Naive thymus-derived CD4-positive, alpha-beta T cell (primary cell): ENCODE measurements at regions of chr11 and their contacts with region 1.

Region 1: DNA sequence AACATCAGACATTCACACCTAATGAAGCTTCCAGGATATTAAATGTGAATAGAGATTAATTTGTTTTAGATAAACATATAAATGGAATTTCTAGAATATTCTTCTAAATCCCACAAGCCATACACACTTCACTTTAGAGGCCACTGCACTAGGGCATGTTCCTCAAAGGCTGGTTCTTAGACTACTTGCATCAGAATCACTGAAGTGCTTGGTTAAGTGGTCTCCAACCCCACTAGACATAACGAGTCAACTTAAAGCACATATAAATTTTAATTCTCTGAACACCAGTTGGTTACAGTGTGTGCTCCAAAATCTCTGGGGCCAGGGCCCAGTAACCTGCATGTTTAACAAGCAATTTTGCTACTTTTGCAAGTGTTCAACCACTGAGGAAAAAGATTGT is 7.9 kb upstream of the ALKBH8 start:
- DNase-seq: no peak
- ATAC-seq: no peak
- H3K4me3 ChIP-seq: no peak overlapping the region
- H3K4me3 Mint-ChIP-seq: no peak overlapping the region
- H3K27ac ChIP-seq: no peak overlapping the region
- H3K27ac Mint-ChIP-seq: no peak overlapping the region
- H3K4me1 ChIP-seq: no peaks in the 10 kb centered on the region
- H3K4me1 Mint-ChIP-seq: peaks cover 0 to 2% (median 0%) of the 10 kb centered on the region in 7 donors
- H3K27me3 ChIP-seq: no peaks in the 10 kb centered on the region
- H3K27me3 Mint-ChIP-seq: peaks cover 0 to 12% (median 0%) of the 10 kb centered on the region in 5 donors

Region 2: DNA sequence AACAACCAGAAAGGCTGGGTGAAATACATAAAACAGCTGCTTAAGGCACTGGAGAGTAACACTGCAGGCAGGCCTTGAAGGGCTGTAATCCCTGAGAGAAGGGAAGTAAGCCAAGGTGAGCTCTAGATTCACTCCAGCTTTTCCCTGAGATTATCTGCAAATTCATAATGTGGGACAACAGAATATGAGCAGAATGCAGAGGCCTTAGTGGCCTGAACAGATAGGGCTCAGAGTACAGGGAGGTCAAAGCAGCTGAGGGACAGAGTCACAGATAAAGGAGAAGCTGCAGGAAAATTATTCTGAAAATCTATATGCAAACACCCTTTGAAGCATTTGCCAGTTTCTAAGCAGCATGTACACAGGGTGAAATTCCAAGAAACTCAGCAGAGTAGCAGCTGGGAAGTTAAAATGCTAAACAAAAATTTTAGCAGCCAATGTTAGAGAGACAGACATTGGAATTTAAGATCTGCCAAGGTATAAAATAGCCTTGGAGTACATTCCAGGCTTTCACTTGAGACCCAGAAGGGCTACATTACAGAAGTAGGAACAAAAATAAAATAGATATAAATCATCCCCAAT is 67.7 kb before region 1 on chr11:
- CTCF ChIA-PET with region 1: no interaction called
- POLR2A ChIA-PET with region 1: no interaction called
- intact Hi-C with region 1: no loop called
- DNase-seq: no peak
- ATAC-seq: no peak
- H3K4me3 ChIP-seq: no peak overlapping the region
- H3K4me3 Mint-ChIP-seq: no peak overlapping the region
- H3K27ac ChIP-seq: no peak overlapping the region
- H3K27ac Mint-ChIP-seq: no peak overlapping the region
- H3K4me1 ChIP-seq: no peaks in the 10 kb centered on the region
- H3K4me1 Mint-ChIP-seq: no peaks in the 10 kb centered on the region
- H3K27me3 ChIP-seq: no peaks in the 10 kb centered on the region
- H3K27me3 Mint-ChIP-seq: no peaks in the 10 kb centered on the region

Region 3: DNA sequence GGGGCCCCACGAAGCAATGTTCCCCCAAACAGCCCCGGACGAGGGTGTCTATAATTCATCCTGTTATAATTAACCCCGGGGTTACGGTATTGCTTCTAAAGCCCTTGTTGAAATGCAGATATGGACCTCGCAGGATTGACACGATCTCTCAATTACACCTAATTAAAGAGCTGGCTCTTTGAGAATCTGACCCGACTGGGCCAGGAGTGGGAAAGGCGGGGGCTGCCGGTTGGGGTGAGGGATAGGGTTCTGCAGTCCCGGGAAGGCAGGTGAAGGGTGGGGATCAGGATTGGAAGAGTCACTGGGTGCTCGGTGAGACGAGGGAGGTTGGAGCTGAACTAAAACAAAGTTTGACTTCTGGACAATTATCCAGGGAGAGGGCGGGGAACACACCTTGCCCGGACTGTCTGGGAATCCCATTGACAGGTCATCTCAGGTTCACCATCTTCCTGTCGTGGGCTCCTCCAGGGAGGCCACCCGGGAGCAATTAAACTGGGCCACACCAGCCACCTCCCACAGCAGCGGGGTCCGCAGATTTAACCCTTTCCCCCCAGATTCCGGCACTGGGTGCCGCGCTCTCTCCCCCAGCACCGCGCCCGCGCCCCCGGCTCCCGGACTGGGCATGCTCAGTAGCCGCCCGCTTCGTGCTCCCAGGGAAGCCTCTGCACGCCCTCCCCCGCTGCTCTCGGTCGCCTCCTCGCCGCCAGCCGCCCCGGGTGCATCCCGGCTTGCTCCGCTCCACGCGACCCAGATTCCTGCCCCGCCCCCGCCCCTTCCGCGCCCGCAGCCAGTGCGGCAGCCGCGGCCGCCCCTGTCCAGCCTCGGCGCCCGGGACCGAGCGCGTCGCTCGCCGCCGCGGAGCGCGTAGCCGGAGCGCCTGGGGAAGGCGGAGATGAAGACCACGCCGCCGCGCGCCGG is 17.3 kb after region 1 on chr11 and contains the start of gene ELMOD1:
- CTCF ChIA-PET with region 1: interaction called, 3 read pairs
- POLR2A ChIA-PET with region 1: no interaction called
- intact Hi-C with region 1: loop called in 1 of 2 experiments (anchors 2 kb)
- DNase-seq: peak in 5 of 9 donors; percentile 9 to 54 (median 18)
- ATAC-seq: peak; percentile 53
- H3K4me3 ChIP-seq: peak within 1 kb of the TSS; percentile 63
- H3K4me3 Mint-ChIP-seq: peak within 1 kb of the TSS; percentile 83 to 94 (median 88)
- H3K27ac ChIP-seq: no peak within 1 kb of the TSS
- H3K27ac Mint-ChIP-seq: peak within 1 kb of the TSS in 3 of 9 donors; percentile 16 to 82 (median 62)
- H3K4me1 ChIP-seq: peaks cover 8 to 13% of the 10 kb centered on the region in 2 donors
- H3K4me1 Mint-ChIP-seq: peaks cover 15 to 37% (median 20%) of the 10 kb centered on the region in 7 donors
- H3K27me3 ChIP-seq: peaks cover 28 to 35% of the 10 kb centered on the region in 2 donors
- H3K27me3 Mint-ChIP-seq: peaks cover 73 to 93% (median 82%) of the 10 kb centered on the region in 5 donors
- total RNA-seq, gene ELMOD1: not detected

Region 4: DNA sequence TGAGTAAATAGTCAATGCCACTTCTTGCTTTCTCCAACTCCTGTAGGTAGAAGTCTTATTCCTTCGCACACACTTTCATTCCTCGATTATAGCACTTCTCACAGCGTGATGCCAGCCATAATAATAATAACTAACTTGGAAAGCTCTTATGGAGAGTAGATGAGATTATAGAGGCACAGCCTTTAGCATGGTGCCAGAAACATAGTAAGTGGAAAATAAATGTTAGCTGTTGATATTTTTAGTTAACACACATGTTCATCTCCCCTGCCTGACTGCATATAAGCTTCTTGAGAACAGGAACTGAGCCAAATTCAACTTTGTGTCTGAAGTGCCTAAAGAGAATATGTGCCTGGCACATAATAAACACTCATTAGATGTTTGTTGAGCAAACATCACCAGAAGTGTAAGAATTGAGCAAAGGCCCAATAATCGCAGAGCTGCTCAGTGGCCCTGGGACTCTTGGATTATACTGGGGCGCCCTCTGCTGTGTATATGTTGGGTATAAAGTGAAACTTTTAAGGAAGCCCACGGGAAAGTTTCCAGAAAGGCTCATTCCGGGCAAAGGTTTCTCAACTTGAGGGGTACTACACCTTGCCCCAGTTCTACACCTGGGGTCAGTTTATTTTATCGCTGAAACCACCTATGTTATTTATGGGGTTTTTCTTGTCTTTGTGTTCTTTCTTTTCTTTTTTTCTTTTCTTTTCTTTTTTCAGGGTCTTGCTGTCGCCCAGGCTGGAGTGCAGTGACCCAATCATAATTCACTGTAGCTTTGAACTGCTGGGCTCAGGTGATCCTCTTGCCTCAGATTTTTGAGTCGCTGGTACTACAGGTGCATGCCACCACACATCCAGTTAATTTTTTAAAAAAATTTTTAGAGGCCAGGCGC is 116.1 kb after region 1 on chr11:
- CTCF ChIA-PET with region 1: interaction called, 7 read pairs
- POLR2A ChIA-PET with region 1: no interaction called
- intact Hi-C with region 1: loop called (anchors 1 kb)
- DNase-seq: peak; percentile 7 to 51 (median 45)
- ATAC-seq: peak; percentile 84
- H3K4me3 ChIP-seq: no peak overlapping the region
- H3K4me3 Mint-ChIP-seq: no peak overlapping the region
- H3K27ac ChIP-seq: no peak overlapping the region
- H3K27ac Mint-ChIP-seq: no peak overlapping the region
- H3K4me1 ChIP-seq: no peaks in the 10 kb centered on the region
- H3K4me1 Mint-ChIP-seq: peaks cover 0 to 5% (median 0%) of the 10 kb centered on the region in 7 donors
- H3K27me3 ChIP-seq: no peaks in the 10 kb centered on the region
- H3K27me3 Mint-ChIP-seq: peaks cover 12 to 26% (median 20%) of the 10 kb centered on the region in 5 donors

Region 5: GRCh38 chr11:107770551-107770951 is 197.1 kb after region 1 on chr11:
- CTCF ChIA-PET with region 1: no interaction called
- POLR2A ChIA-PET with region 1: no interaction called
- intact Hi-C with region 1: loop called (anchors 1 to 2 kb)
- DNase-seq: no peak
- ATAC-seq: no peak
- H3K4me3 ChIP-seq: no peak overlapping the region
- H3K4me3 Mint-ChIP-seq: no peak overlapping the region
- H3K27ac ChIP-seq: no peak overlapping the region
- H3K27ac Mint-ChIP-seq: no peak overlapping the region
- H3K4me1 ChIP-seq: no peaks in the 10 kb centered on the region
- H3K4me1 Mint-ChIP-seq: peaks cover 0 to 2% (median 0%) of the 10 kb centered on the region in 7 donors
- H3K27me3 ChIP-seq: no peaks in the 10 kb centered on the region
- H3K27me3 Mint-ChIP-seq: peaks cover 0 to 16% (median 10%) of the 10 kb centered on the region in 5 donors

Region 6: DNA sequence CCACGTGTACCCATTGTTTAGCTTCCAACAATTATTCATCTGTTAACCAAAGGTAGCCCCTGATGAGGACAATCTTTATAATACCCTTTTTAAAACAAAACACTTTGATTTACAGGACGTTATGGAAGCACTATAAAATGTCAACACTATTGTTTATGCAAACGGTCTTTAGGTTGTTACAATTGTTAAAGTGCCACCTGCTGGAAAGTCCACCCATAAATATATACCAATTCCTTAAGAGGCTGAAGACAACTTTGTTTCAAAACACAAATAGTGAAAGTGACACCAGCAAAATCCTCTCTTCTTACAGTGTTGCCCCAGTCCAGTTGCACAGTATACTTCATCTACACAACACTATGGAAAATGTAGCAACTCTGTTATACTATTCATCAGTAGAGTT is 207.3 kb after region 1 on chr11:
- CTCF ChIA-PET with region 1: no interaction called
- POLR2A ChIA-PET with region 1: no interaction called
- intact Hi-C with region 1: no loop called
- DNase-seq: no peak
- ATAC-seq: no peak
- H3K4me3 ChIP-seq: no peak overlapping the region
- H3K4me3 Mint-ChIP-seq: no peak overlapping the region
- H3K27ac ChIP-seq: no peak overlapping the region
- H3K27ac Mint-ChIP-seq: no peak overlapping the region
- H3K4me1 ChIP-seq: no peaks in the 10 kb centered on the region
- H3K4me1 Mint-ChIP-seq: no peaks in the 10 kb centered on the region
- H3K27me3 ChIP-seq: no peaks in the 10 kb centered on the region
- H3K27me3 Mint-ChIP-seq: peaks cover 0 to 10% (median 2%) of the 10 kb centered on the region in 5 donors

Region 7: GRCh38 chr11:108654994-108655631 is 1081.7 kb after region 1 on chr11:
- CTCF ChIA-PET with region 1: no interaction called
- POLR2A ChIA-PET with region 1: no interaction called
- intact Hi-C with region 1: loop called in 1 of 2 experiments (anchors 2 kb)
- DNase-seq: peak in 5 of 9 donors; percentile 5 to 31 (median 13)
- ATAC-seq: no peak
- H3K4me3 ChIP-seq: no peak overlapping the region
- H3K4me3 Mint-ChIP-seq: no peak overlapping the region
- H3K27ac ChIP-seq: no peak overlapping the region
- H3K27ac Mint-ChIP-seq: no peak overlapping the region
- H3K4me1 ChIP-seq: no peaks in the 10 kb centered on the region
- H3K4me1 Mint-ChIP-seq: peaks cover 0 to 5% (median 0%) of the 10 kb centered on the region in 7 donors
- H3K27me3 ChIP-seq: no peaks in the 10 kb centered on the region
- H3K27me3 Mint-ChIP-seq: peaks cover 0 to 26% (median 0%) of the 10 kb centered on the region in 5 donors